ENCODE measurements at regions of chr12 and their contacts with region 1.

Region 1: GRCh38 chr12:60967128-60967527 is 1293.1 kb upstream of the USP15 start:
- DNase-seq: no peak
- ATAC-seq: no peak
- H3K4me3 ChIP-seq: no peak overlapping the region
- H3K27ac ChIP-seq: no peak overlapping the region
- H3K4me1 ChIP-seq: no peaks in the 10 kb centered on the region
- H3K27me3 ChIP-seq: no peaks in the 10 kb centered on the region
- CTCF ChIP-seq: no peak
- EP300 ChIP-seq: no peak
- POLR2A ChIP-seq: no peak
- RAD21 ChIP-seq: no peak

Region 2: GRCh38 chr12:60879894-60880293 is 87.2 kb before region 1 on chr12:
- CTCF ChIA-PET with region 1: no interaction called
- POLR2A ChIA-PET with region 1: no interaction called
- in situ Hi-C with region 1: no loop called
- intact Hi-C with region 1: loop called (anchors 5 kb)
- DNase-seq: no peak
- ATAC-seq: no peak
- H3K4me3 ChIP-seq: no peak overlapping the region
- H3K27ac ChIP-seq: no peak overlapping the region
- H3K4me1 ChIP-seq: no peaks in the 10 kb centered on the region
- H3K27me3 ChIP-seq: no peaks in the 10 kb centered on the region
- CTCF ChIP-seq: no peak
- EP300 ChIP-seq: no peak
- POLR2A ChIP-seq: no peak
- RAD21 ChIP-seq: no peak

Measured in HepG2 (cell line).